Breast epithelium (tissue), 4 donors: ENCODE measurements at regions of chr9 and their contacts with region 1.

Region 1: DNA sequence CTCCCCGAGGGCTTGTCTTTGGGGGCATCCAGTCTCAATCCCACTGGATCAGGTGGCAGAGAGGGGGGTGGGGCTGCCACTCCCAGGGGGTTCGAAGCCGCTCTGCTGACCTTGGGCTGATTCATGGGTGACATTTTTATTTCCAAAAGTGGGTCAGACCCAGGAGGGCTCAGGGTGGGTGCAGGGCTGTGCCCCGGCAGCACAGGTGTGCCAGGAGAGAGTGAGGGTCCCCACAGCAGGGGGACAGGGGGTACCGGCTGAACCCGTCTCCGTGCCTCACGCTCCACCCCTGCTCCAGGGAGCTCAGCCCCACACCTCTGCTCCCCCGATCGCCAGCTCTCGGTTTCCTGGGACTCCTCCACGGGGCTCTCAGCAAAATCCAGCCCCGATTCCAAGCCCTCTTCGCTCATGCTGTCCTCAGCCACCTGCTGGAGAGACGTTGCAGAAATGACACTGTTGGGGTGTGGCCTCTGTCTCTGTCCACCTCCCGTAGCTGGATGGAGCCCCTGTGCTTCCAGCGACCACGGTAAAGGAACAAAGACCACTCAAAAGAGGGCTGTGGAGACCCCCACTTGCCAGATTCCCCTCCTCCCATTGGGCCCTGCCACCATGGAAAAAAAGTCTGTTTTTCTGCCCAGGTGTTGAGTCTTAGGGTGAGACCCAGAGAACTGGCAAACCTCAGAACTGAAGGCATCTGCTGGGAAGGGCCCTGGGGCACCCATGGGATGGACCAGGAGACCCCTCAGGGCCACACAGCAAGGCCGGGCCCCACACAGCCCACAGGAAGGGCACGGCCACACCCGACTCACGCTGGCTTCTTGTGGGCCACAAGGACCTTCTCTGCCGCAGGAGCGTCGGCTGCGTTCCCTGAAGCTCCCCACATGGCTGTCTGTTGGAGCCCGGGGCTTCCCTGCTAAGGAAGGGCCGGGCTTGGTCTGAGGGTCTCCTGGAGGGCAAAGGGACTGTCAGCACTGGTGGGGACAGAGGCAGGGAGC is 10.6 kb upstream of the QSOX2 start:
- DNase-seq: no peak
- H3K4me3 ChIP-seq: no peak overlapping the region
- H3K27ac ChIP-seq: no peak overlapping the region
- H3K4me1 ChIP-seq: no peaks in the 10 kb centered on the region
- H3K27me3 ChIP-seq: peaks cover 0 to 32% of the 10 kb centered on the region in 2 donors
- CTCF ChIP-seq: no peak
- POLR2A ChIP-seq: no peak

Region 2: DNA sequence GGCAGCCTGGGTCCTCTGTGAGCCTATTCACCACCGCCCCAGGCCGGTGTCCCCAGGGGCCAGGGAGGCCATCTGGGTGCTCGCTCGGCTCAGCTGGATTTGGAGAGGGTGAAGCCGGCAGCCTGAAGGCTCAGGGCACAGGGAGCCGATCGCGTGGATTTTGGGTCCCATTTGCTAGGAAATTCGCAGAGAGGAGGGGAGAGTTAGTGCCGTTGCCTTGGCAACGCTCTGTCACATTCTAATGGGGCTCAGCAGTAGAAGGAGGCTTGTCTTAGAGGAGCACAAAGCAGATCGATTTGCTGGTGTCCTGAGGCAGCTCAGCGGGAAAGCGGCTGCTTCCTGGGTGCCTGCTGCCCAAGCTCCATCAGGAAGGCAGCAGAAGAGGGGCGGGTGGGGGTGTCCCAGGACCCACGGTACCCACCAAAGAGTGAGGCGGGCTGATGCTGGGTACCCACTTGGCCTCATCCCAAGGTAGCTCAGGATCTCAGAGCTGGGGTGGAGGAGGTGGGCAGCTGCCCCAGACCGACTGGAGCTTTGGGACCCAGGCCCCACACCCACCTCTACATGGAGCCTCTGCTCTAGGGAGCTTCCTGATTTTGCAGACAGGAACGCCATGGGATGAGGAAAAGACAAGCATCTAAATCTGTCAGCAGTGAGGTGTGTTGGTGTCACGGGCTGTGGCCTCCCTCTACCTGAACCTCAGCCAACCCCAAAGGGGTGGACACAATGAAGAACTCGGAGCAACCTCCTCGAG is 1185.8 kb before region 1 on chr9:
- intact Hi-C with region 1: loop called (anchors 5 kb)
- DNase-seq: peak in 1 of 2 donors; percentile 20
- H3K4me3 ChIP-seq: no peak overlapping the region
- H3K27ac ChIP-seq: no peak overlapping the region
- H3K4me1 ChIP-seq: no peaks in the 10 kb centered on the region
- H3K27me3 ChIP-seq: peaks cover 0 to 46% of the 10 kb centered on the region in 2 donors
- CTCF ChIP-seq: no peak
- POLR2A ChIP-seq: no peak

Region 3: DNA sequence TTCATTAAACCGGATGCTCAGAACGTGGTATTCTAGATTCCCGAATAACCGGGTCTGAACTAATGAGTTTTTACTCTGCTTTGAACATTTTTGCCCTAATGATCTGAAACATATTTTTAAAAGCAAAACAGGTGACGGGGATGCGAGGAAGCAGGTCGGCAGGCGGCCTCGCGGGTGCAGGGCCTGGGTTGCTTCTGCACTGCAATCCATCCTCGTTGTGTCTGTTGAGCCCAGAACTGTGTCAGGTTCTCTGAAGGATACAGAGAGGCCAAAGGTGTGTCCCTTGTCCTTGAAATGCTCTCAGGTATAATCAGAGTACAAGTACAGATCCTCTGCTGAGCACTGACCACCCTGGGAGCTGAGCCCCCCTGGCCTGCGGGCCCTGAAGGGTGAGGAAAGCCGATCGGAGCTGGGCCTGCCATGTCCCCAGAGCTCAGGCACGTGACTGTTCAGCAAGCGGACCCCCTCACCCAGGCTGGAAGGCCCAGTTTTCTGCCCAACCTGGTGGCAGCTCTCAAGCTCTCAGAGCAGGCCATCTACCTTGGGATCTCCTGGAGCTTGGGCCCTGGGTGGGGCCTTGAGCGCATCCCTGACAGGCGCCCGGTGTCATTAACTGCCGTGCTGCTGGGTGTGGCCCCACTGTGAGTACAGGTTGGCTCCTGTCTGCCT is 1017.0 kb before region 1 on chr9:
- intact Hi-C with region 1: loop called (anchors 5 kb)
- DNase-seq: no peak
- H3K4me3 ChIP-seq: no peak overlapping the region
- H3K27ac ChIP-seq: no peak overlapping the region
- H3K4me1 ChIP-seq: peaks cover 0 to 5% of the 10 kb centered on the region in 2 donors
- H3K27me3 ChIP-seq: peaks cover 0 to 33% of the 10 kb centered on the region in 2 donors
- CTCF ChIP-seq: no peak
- POLR2A ChIP-seq: no peak

Region 4: GRCh38 chr9:136711751-136712689 is 455.8 kb after region 1 on chr9 and contains the start of gene DIPK1B:
- intact Hi-C with region 1: no loop called
- DNase-seq: no peak
- H3K4me3 ChIP-seq: peak within 1 kb of the TSS; percentile 45 to 78 (median 65)
- H3K27ac ChIP-seq: peak within 1 kb of the TSS in 1 of 2 donors; percentile 7
- H3K4me1 ChIP-seq: no peaks in the 10 kb centered on the region
- H3K27me3 ChIP-seq: no peaks in the 10 kb centered on the region
- CTCF ChIP-seq: no peak
- POLR2A ChIP-seq: no peak
- total RNA-seq, gene DIPK1B: 4.8 to 8.2 (median 5.6) TPM